CD4-positive, alpha-beta T cell (primary cell): ENCODE measurements at regions of chr5 and their contacts with region 1.

Region 1: GRCh38 chr5:168486136-168486879 is at the start of gene RARS1:
- DNase-seq: peak; percentile 75 to 94 (median 83)
- ATAC-seq: peak; percentile 81
- H3K4me3 ChIP-seq: peak within 1 kb of the TSS; percentile 76
- H3K4me3 Mint-ChIP-seq: peak within 1 kb of the TSS; percentile 97
- H3K27ac ChIP-seq: peak within 1 kb of the TSS; percentile 54 to 64
- H3K27ac Mint-ChIP-seq: peak within 1 kb of the TSS; percentile 83
- H3K4me1 ChIP-seq: peaks cover 15% of the 10 kb centered on the region
- H3K4me1 Mint-ChIP-seq: peaks cover 39% of the 10 kb centered on the region
- H3K27me3 ChIP-seq: no peaks in the 10 kb centered on the region
- H3K27me3 Mint-ChIP-seq: no peaks in the 10 kb centered on the region
- CTCF ChIP-seq: peak; percentile 96
- total RNA-seq, gene RARS1: 67.0 to 67.7 TPM

Region 2: DNA sequence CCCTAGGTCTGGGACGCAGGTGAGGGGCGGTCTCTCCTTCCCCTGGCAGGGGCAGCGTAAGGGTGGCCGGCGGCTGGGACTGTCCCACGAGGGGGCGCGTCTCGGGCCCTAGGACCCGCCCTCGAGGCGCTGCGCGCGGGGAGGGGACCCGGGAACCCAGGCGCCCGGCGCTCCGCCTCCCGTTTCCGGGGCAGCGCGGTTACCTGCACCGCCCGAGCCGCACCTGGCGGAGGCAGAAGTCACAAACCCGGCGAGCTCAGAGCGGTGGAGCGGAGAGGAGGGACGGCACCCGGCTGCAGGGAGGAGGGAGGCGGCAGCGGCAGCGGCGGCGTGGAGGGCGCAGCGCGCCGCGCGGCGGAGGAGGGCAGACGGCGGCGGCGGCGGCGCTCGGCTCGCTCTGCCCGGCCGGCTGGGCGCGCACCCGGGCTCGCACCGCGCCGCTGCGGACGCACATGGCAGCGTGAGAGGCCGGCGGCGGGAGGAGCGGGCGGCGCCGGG is 194.8 kb before region 1 on chr5 and contains the start of gene WWC1:
- CTCF ChIA-PET with region 1: no interaction called
- POLR2A ChIA-PET with region 1: no interaction called
- intact Hi-C with region 1: loop called in 1 of 2 experiments (anchors 5 kb)
- DNase-seq: peak; percentile 29 to 93 (median 60)
- ATAC-seq: peak; percentile 94
- H3K4me3 ChIP-seq: peak within 1 kb of the TSS; percentile 24
- H3K4me3 Mint-ChIP-seq: peak within 1 kb of the TSS; percentile 76
- H3K27ac ChIP-seq: no peak within 1 kb of the TSS
- H3K27ac Mint-ChIP-seq: no peak within 1 kb of the TSS
- H3K4me1 ChIP-seq: peaks cover 17% of the 10 kb centered on the region
- H3K4me1 Mint-ChIP-seq: peaks cover 19% of the 10 kb centered on the region
- H3K27me3 ChIP-seq: peaks cover 15 to 30% of the 10 kb centered on the region in 2 experiments
- H3K27me3 Mint-ChIP-seq: peaks cover 62% of the 10 kb centered on the region
- CTCF ChIP-seq: no peak
- total RNA-seq, gene WWC1: 1.0 to 1.3 TPM

Region 3: DNA sequence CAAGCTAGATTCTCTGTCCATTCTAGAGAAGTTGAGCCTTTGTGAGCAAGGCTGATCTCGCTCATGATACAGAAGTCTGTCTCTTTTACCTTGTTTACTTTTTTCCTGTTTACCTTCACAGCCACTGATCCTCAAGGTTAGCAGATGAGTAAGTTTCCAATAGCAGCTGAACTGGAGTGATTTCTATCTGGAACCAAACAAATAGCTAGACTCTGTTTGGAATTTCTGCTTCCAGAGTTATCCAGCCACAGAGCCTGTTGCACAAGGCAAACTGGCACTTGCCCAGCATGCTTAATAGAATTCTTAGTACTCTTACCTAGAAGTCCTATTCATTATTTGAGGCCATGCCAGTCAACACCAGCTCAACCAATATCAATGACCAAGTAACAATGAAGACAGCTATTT is 105.7 kb after region 1 on chr5:
- CTCF ChIA-PET with region 1: no interaction called
- POLR2A ChIA-PET with region 1: no interaction called
- intact Hi-C with region 1: no loop called
- DNase-seq: no peak
- ATAC-seq: no peak
- H3K4me3 ChIP-seq: no peak overlapping the region
- H3K4me3 Mint-ChIP-seq: no peak overlapping the region
- H3K27ac ChIP-seq: no peak overlapping the region
- H3K27ac Mint-ChIP-seq: no peak overlapping the region
- H3K4me1 ChIP-seq: no peaks in the 10 kb centered on the region
- H3K4me1 Mint-ChIP-seq: no peaks in the 10 kb centered on the region
- H3K27me3 ChIP-seq: peaks cover 0 to 7% of the 10 kb centered on the region in 2 experiments
- H3K27me3 Mint-ChIP-seq: peaks cover 35% of the 10 kb centered on the region
- CTCF ChIP-seq: no peak